Caco-2 (cell line): ENCODE measurements at regions of chr11 and their contacts with region 1.

Region 1: GRCh38 chr11:33891714-33892327 is at the start of gene LMO2:
- DNase-seq: no peak
- H3K4me3 ChIP-seq: no peak within 1 kb of the TSS
- H3K4me3 Mint-ChIP-seq: no peak within 1 kb of the TSS
- H3K27ac Mint-ChIP-seq: no peak within 1 kb of the TSS
- H3K4me1 ChIP-seq: no peaks in the 10 kb centered on the region
- H3K4me1 Mint-ChIP-seq: no peaks in the 10 kb centered on the region
- H3K27me3 ChIP-seq: no peaks in the 10 kb centered on the region
- H3K27me3 Mint-ChIP-seq: peaks cover 2% of the 10 kb centered on the region
- CTCF ChIP-seq: no peak
- total RNA-seq, gene LMO2: 0.29 TPM in 1 of 2 replicates, not detected in the other

Region 2: GRCh38 chr11:33869481-33870422 is 22.1 kb before region 1 on chr11:
- CTCF ChIA-PET with region 1: no interaction called
- POLR2A ChIA-PET with region 1: no interaction called
- intact Hi-C with region 1: loop called (anchors 1 kb)
- DNase-seq: peak in 1 of 2 experiments; percentile 37
- H3K4me3 ChIP-seq: peak overlapping the region; percentile 37
- H3K4me3 Mint-ChIP-seq: peak overlapping the region; percentile 77
- H3K27ac Mint-ChIP-seq: no peak overlapping the region
- H3K4me1 ChIP-seq: peaks cover 12% of the 10 kb centered on the region; the same call in 1 of the 2 replicates
- H3K4me1 Mint-ChIP-seq: no peaks in the 10 kb centered on the region
- H3K27me3 ChIP-seq: peaks cover 10% of the 10 kb centered on the region
- H3K27me3 Mint-ChIP-seq: peaks cover 40% of the 10 kb centered on the region
- CTCF ChIP-seq: no peak

Region 3: GRCh38 chr11:33930317-33931021 is 38.6 kb after region 1 on chr11:
- CTCF ChIA-PET with region 1: no interaction called
- POLR2A ChIA-PET with region 1: no interaction called
- intact Hi-C with region 1: loop called (anchors 1 kb)
- DNase-seq: no peak
- H3K4me3 ChIP-seq: no peak overlapping the region
- H3K4me3 Mint-ChIP-seq: no peak overlapping the region
- H3K27ac Mint-ChIP-seq: no peak overlapping the region
- H3K4me1 ChIP-seq: no peaks in the 10 kb centered on the region
- H3K4me1 Mint-ChIP-seq: peaks cover 6% of the 10 kb centered on the region
- H3K27me3 ChIP-seq: no peaks in the 10 kb centered on the region; the same call in 1 of the 2 replicates
- H3K27me3 Mint-ChIP-seq: no peaks in the 10 kb centered on the region
- CTCF ChIP-seq: no peak